ENCODE measurements at regions of chrX and their contacts with region 1.

Region 1: GRCh38 chrX:12974796-12975669 is at the start of gene TMSB4X:
- DNase-seq: peak; percentile 73
- H3K4me3 ChIP-seq: peak within 1 kb of the TSS; percentile 96 to 97 (median 96)
- H3K27ac ChIP-seq: peak within 1 kb of the TSS; percentile 88
- H3K4me1 ChIP-seq: peaks cover 44% of the 10 kb centered on the region
- H3K27me3 ChIP-seq: no peaks in the 10 kb centered on the region
- CTCF ChIP-seq: no peak
- POLR2A ChIP-seq: peak; percentile 99
- total RNA-seq, gene TMSB4X: 6,742 and 6,858 TPM in 2 replicates

Region 2: GRCh38 chrX:12955882-12956703 is 18.9 kb before region 1 on chrX:
- CTCF ChIA-PET with region 1: interaction called, 10 read pairs
- POLR2A ChIA-PET with region 1: interaction called, 9 read pairs
- dilution Hi-C with region 1: no loop called
- intact Hi-C with region 1: loop called (anchors 2 kb)
- DNase-seq: peak; percentile 78
- H3K4me3 ChIP-seq: no peak overlapping the region
- H3K27ac ChIP-seq: peak overlapping the region; percentile 85
- H3K4me1 ChIP-seq: peaks cover 27% of the 10 kb centered on the region
- H3K27me3 ChIP-seq: no peaks in the 10 kb centered on the region
- CTCF ChIP-seq: no peak
- POLR2A ChIP-seq: no peak

Region 3: DNA sequence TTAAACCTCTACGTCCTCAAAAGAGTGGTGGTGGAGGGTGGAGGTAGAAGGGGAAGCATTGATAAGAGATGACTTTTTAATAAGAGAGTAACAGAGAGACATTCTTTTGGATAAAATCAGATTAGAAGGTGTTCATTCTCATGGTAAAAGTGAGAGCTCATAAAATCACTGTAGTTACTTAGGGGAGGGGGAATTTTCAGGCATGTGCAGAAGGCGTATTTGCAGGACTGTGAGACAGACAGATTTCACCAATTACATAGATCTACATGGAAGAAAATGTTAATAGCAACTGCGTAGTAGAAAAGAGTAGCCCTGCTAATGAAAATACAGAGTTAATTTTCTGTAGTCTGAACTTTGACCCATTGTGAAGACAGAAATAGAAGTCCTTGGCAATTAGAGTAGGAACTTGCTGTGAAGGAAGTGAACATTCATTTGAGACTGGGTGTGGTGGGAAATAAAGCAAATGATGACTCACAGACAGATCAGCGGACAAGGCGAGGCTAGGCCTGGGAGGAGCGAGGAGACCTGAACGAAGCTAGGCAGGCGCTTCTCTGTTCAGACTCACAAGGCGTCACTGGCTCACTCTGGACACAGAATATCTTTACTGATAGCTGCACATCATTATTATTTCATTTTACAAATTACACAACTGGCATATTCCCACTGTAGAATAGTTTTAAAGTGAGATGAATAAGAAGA is 126.6 kb after region 1 on chrX:
- CTCF ChIA-PET with region 1: interaction called, 5 read pairs
- POLR2A ChIA-PET with region 1: interaction called, 4 read pairs
- dilution Hi-C with region 1: no loop called
- intact Hi-C with region 1: loop called (anchors 1 kb)
- DNase-seq: peak; percentile 90
- H3K4me3 ChIP-seq: no peak overlapping the region
- H3K27ac ChIP-seq: peak overlapping the region; percentile 80
- H3K4me1 ChIP-seq: peaks cover 49% of the 10 kb centered on the region
- H3K27me3 ChIP-seq: no peaks in the 10 kb centered on the region
- CTCF ChIP-seq: no peak
- POLR2A ChIP-seq: no peak

Region 4: GRCh38 chrX:13144927-13145655 is 170.1 kb after region 1 on chrX:
- CTCF ChIA-PET with region 1: no interaction called
- POLR2A ChIA-PET with region 1: no interaction called
- dilution Hi-C with region 1: no loop called
- intact Hi-C with region 1: loop called (anchors 1 kb)
- DNase-seq: peak; percentile 36
- H3K4me3 ChIP-seq: no peak overlapping the region
- H3K27ac ChIP-seq: peak overlapping the region; percentile 48
- H3K4me1 ChIP-seq: peaks cover 13% of the 10 kb centered on the region
- H3K27me3 ChIP-seq: no peaks in the 10 kb centered on the region
- CTCF ChIP-seq: no peak
- POLR2A ChIP-seq: no peak

Region 5: DNA sequence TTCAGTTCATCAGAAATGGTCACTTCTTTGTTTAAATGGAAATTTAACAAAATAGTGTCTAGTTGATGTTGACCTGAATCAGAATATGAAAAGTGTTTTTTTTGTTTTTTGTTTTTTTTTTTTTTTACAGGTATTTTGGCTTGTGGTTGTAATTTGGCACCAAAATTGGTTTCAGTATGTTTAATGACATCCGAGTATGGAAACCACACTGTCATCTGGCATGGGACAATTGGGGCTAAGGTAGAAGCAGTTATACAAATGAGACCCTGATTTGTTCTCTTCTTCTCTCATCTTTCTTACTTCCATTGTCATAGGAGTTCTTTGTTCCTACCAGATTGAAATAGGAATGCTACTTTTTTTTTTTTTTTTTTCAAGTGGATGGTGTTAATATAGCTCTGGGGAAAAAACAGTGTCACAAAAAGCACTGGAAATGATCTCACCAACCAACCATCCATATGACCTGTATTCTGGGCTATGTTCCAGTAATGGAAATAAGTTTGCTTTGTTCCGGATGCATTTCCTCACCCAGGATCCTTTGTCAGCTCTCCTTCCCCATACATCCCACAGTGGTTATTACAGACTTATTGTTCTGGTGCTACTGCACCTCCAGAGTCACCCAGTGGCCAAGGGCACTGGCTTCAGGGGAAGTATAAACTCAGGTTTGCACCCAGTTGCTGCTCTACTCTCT is 249.0 kb after region 1 on chrX:
- CTCF ChIA-PET with region 1: interaction called, 3 read pairs
- POLR2A ChIA-PET with region 1: interaction called, 8 read pairs
- dilution Hi-C with region 1: no loop called
- intact Hi-C with region 1: loop called (anchors 1 kb)
- DNase-seq: peak; percentile 91
- H3K4me3 ChIP-seq: no peak overlapping the region
- H3K27ac ChIP-seq: peak overlapping the region; percentile 87
- H3K4me1 ChIP-seq: peaks cover 16% of the 10 kb centered on the region
- H3K27me3 ChIP-seq: no peaks in the 10 kb centered on the region
- CTCF ChIP-seq: peak in 1 of 2 donors; percentile 14
- POLR2A ChIP-seq: no peak

Region 6: DNA sequence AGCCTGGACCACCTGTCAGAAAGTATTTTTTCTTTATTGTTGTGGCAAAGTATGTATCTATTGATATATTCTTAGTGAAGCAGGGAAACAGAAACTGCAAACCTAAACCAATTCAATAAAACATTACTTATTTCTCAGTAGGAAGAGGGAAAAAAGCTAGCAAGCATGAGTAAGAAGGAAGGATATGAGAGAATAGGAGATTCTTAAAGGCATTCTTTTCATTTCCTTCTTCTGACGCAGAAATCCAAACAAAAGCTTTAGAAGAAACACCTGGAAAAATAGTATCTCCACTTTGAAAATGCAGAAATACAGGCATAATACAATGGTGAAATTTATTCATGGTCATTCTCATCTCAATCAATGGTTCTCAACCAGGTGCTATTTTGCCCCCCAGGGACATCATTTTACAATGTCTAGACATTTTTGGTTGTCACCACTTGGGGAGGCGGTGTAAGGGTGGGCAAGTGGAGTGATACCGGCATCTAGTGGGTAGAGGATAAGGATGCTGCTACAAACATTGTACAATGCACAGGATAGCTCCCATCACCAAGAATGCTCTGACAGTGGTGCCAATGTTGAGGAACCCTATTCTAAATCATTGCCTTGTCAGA is 366.6 kb after region 1 on chrX:
- CTCF ChIA-PET with region 1: no interaction called
- POLR2A ChIA-PET with region 1: interaction called, 9 read pairs
- dilution Hi-C with region 1: no loop called
- intact Hi-C with region 1: loop called (anchors 1 kb)
- DNase-seq: peak; percentile 59
- H3K4me3 ChIP-seq: no peak overlapping the region
- H3K27ac ChIP-seq: peak overlapping the region; percentile 90
- H3K4me1 ChIP-seq: peaks cover 20% of the 10 kb centered on the region
- H3K27me3 ChIP-seq: no peaks in the 10 kb centered on the region
- CTCF ChIP-seq: no peak
- POLR2A ChIP-seq: no peak

Region 7: GRCh38 chrX:13487731-13488523 is 512.9 kb after region 1 on chrX:
- CTCF ChIA-PET with region 1: interaction called, 25 read pairs
- POLR2A ChIA-PET with region 1: interaction called, 23 read pairs
- dilution Hi-C with region 1: no loop called
- intact Hi-C with region 1: loop called (anchors 1 kb)
- DNase-seq: peak; percentile 81
- H3K4me3 ChIP-seq: no peak overlapping the region
- H3K27ac ChIP-seq: peak overlapping the region; percentile 90
- H3K4me1 ChIP-seq: peaks cover 13% of the 10 kb centered on the region
- H3K27me3 ChIP-seq: no peaks in the 10 kb centered on the region
- CTCF ChIP-seq: peak in 1 of 2 donors; percentile 15
- POLR2A ChIP-seq: peak; percentile 15